HepG2 (cell line): ENCODE measurements at regions of chr20 and their contacts with region 1.

Region 1: GRCh38 chr20:57582432-57583305 is 21.8 kb downstream of the PCK1 start:
- DNase-seq: peak; percentile 24
- ATAC-seq: peak; percentile 56
- H3K4me3 ChIP-seq: peak overlapping the region in 1 of 3 experiments; percentile 30; a peak in 1 of 6 replicates
- H3K27ac ChIP-seq: peak overlapping the region; percentile 53
- H3K4me1 ChIP-seq: peaks cover 100% of the 10 kb centered on the region
- H3K27me3 ChIP-seq: no peaks in the 10 kb centered on the region
- CTCF ChIP-seq: peak; percentile 94
- EP300 ChIP-seq: peak in 1 of 2 experiments; percentile 70; a peak in 2 of 4 replicates
- POLR2A ChIP-seq: no peak
- RAD21 ChIP-seq: peak; percentile 73; the same call in 1 of the 2 replicates

Region 2: DNA sequence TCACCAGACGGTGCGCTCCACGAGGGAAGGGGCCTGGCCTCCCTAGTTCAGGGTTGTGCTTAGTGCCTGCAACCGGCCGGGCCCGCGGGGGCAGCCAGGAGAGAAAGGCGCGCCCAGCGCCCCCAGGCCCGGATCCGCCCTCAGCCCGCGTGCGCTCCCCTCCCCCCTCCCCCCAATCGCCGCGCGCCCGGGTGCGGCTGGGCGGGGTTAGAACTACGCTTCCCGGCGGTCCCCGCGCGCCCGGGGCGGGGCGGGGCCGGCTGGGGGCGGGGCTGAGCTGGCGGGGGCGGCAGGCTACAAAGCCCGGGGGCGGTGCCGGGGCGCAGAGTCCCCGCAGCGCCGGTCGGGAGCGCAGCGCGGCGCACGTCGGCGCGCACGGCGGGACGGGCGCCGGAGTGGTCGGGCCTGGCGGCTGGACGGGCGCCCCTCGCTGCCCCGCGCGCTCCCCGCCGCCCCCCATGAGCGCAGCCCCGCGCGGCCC is 191.6 kb before region 1 on chr20 and contains the start of gene RBM38:
- CTCF ChIA-PET with region 1: no interaction called
- POLR2A ChIA-PET with region 1: interaction called, 3 read pairs
- in situ Hi-C with region 1: loop called (anchors 10 kb)
- intact Hi-C with region 1: no loop called
- DNase-seq: peak; percentile 56
- ATAC-seq: peak; percentile 72
- H3K4me3 ChIP-seq: peak within 1 kb of the TSS; percentile 76 to 97 (median 96)
- H3K27ac ChIP-seq: peak within 1 kb of the TSS; percentile 58
- H3K4me1 ChIP-seq: peaks cover 37% of the 10 kb centered on the region
- H3K27me3 ChIP-seq: no peaks in the 10 kb centered on the region
- CTCF ChIP-seq: no peak
- EP300 ChIP-seq: no peak
- POLR2A ChIP-seq: peak in 1 of 2 experiments; percentile 46; a peak in 2 of 4 replicates
- RAD21 ChIP-seq: no peak
- total RNA-seq, gene RBM38: 29.6 and 34.2 TPM in 2 replicates

Region 3: GRCh38 chr20:57555457-57556184 is 27.0 kb before region 1 on chr20:
- CTCF ChIA-PET with region 1: interaction called, 3 read pairs
- POLR2A ChIA-PET with region 1: interaction called, 96 read pairs
- in situ Hi-C with region 1: no loop called
- intact Hi-C with region 1: no loop called
- DNase-seq: no peak
- ATAC-seq: peak; percentile 58
- H3K4me3 ChIP-seq: peak overlapping the region in 1 of 3 experiments; percentile 2; a peak in 1 of 6 replicates
- H3K27ac ChIP-seq: peak overlapping the region; percentile 15
- H3K4me1 ChIP-seq: peaks cover 65% of the 10 kb centered on the region
- H3K27me3 ChIP-seq: peaks cover 7 to 32% of the 10 kb centered on the region in 2 experiments; a peak in 4 of 5 replicates
- CTCF ChIP-seq: no peak
- EP300 ChIP-seq: peak; percentile 27 to 83; a peak in 2 of 4 replicates
- POLR2A ChIP-seq: no peak
- RAD21 ChIP-seq: no peak

Region 4: DNA sequence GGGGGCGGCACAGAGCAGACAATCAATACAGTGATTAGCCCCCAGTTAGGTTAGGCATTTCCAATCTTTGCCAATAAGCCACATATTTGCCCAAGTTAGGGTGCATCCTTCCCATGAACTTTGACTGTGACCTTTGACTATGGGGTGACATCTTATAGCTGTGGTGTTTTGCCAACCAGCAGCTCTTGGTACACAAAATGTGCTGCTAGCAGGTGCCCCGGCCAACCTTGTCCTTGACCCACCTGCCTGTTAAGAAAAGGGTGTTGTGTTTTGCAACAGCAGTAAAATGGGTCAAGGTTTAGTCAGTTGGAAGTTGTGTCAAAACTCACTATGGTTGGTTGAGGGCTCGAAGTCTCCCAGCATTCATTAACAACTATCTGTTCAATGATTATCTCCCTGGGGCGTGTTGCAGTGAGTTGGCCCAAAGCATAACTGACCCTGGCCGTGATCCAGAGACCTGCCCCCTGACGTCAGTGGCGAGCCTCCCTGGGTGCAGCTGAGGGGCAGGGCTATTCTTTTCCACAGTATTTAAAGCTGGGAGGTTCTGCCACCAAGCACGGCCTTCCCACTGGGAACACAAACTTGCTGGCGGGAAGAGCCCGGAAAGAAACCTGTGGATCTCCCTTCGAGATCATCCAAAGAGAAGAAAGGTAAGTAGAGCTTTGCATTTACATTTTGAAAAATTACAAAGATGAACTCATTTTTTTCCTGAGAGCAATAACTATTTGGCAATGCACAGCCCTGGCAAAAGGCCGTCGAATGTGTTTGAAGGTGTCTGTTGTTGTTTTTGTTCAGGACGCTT is 21.9 kb before region 1 on chr20 and contains the start of gene PCK1:
- CTCF ChIA-PET with region 1: interaction called, 3 read pairs
- POLR2A ChIA-PET with region 1: interaction called, 96 read pairs
- in situ Hi-C with region 1: no loop called
- intact Hi-C with region 1: no loop called
- DNase-seq: peak; percentile 89
- ATAC-seq: peak; percentile 89
- H3K4me3 ChIP-seq: peak within 1 kb of the TSS; percentile 47 to 68 (median 50)
- H3K27ac ChIP-seq: peak within 1 kb of the TSS; percentile 80
- H3K4me1 ChIP-seq: peaks cover 100% of the 10 kb centered on the region
- H3K27me3 ChIP-seq: peaks cover 7 to 10% of the 10 kb centered on the region in 2 experiments; a peak in 4 of 5 replicates
- CTCF ChIP-seq: no peak; the same call in 1 of the 2 replicates
- EP300 ChIP-seq: peak; percentile 95 to 98
- POLR2A ChIP-seq: peak; percentile 79 to 94; a peak in 3 of 4 replicates
- RAD21 ChIP-seq: no peak
- total RNA-seq, gene PCK1: 5.4 and 12.6 TPM in 2 replicates

Region 5: DNA sequence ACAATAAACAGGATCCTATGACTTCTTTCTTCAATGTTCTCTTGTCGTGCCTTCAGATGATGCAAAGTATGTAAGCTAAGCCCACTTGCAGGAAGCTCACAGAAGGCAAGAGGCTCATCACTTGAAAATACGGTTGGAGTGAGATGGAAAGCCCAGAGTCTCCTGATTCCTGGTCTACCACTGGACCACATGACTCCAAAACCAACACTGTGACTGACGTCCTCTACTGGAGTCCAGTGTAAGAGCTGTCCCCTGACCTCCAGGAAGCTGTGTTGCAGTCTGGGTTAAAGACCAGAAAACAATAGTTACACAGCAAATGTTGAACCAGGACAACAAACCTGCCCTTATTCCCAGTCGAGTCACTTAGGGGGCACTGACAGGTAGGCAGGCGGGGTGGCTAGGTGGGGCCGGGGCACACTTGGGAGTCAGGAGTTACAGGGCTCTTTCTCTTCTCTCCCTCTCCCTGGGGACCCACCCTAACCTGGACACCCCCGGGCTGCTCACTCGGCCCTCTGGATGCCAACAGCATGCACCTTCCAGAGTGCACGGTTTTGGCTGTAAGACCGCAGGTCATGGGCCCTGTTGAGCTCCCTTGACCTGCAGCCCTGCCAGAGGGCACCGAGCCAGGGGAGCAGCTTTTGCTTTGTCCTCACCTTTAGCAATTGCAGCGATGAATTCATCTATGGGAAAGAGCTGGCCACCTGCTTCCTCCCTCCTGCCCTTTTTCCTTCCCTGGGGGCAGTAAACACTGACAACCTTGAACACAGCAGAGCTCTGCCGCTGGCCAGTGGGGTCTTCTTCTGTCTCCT is 14.4 kb before region 1 on chr20:
- CTCF ChIA-PET with region 1: no interaction called
- POLR2A ChIA-PET with region 1: interaction called, 26 read pairs
- in situ Hi-C with region 1: no loop called
- intact Hi-C with region 1: no loop called
- DNase-seq: peak; percentile 31
- ATAC-seq: peak; percentile 86
- H3K4me3 ChIP-seq: peak overlapping the region in 1 of 3 experiments; percentile 55; a peak in 2 of 6 replicates
- H3K27ac ChIP-seq: peak overlapping the region; percentile 52
- H3K4me1 ChIP-seq: peaks cover 73% of the 10 kb centered on the region
- H3K27me3 ChIP-seq: peaks cover 0 to 7% of the 10 kb centered on the region in 2 experiments; a peak in 3 of 5 replicates
- CTCF ChIP-seq: peak; percentile 68
- EP300 ChIP-seq: peak in 1 of 2 experiments; percentile 66; a peak in 2 of 4 replicates
- POLR2A ChIP-seq: peak; percentile 37 to 40; a peak in 2 of 4 replicates
- RAD21 ChIP-seq: no peak

Region 6: GRCh38 chr20:57596998-57597939 is 14.6 kb after region 1 on chr20:
- CTCF ChIA-PET with region 1: interaction called, 14 read pairs
- POLR2A ChIA-PET with region 1: interaction called, 13 read pairs
- in situ Hi-C with region 1: no loop called
- intact Hi-C with region 1: no loop called
- DNase-seq: peak; percentile 43
- ATAC-seq: peak; percentile 75
- H3K4me3 ChIP-seq: peak overlapping the region in 1 of 3 experiments; percentile 27; a peak in 1 of 6 replicates
- H3K27ac ChIP-seq: no peak overlapping the region
- H3K4me1 ChIP-seq: peaks cover 25% of the 10 kb centered on the region
- H3K27me3 ChIP-seq: peaks cover 0 to 36% of the 10 kb centered on the region in 2 experiments; a peak in 4 of 5 replicates
- CTCF ChIP-seq: peak; percentile 98
- EP300 ChIP-seq: 0 out of 4 replicates have a peak, but pooled peaks of 1 of the 2 experiments have one; percentile 16
- POLR2A ChIP-seq: no peak
- RAD21 ChIP-seq: peak; percentile 97